H1 (cell line): ENCODE measurements at regions of chr3 and their contacts with region 1.

Region 1: GRCh38 chr3:58177747-58178527 is 32.8 kb downstream of the DNASE1L3 start:
- DNase-seq: peak; percentile 57 to 99
- H3K4me3 ChIP-seq: peak overlapping the region; percentile 0 to 62 (median 47); a peak in 6 of 8 replicates
- H3K27ac ChIP-seq: no peak overlapping the region
- H3K4me1 ChIP-seq: peaks cover 4 to 24% (median 14%) of the 10 kb centered on the region in 4 experiments
- H3K27me3 ChIP-seq: peaks cover 0 to 6% (median 2%) of the 10 kb centered on the region in 4 experiments; a peak in 2 of 7 replicates
- CTCF ChIP-seq: peak; percentile 78 to 94 (median 91)
- EP300 ChIP-seq: no peak
- POLR2A ChIP-seq: no peak; a peak in 1 of 3 replicates
- RAD21 ChIP-seq: peak; percentile 69 to 78

Region 2: GRCh38 chr3:57832900-57833313 is 345.0 kb before region 1 on chr3:
- CTCF ChIA-PET with region 1: no interaction called
- POLR2A ChIA-PET with region 1: no interaction called
- DNase-seq: no peak
- H3K4me3 ChIP-seq: 0 out of 8 replicates have a peak overlapping the region, but pooled peaks of 1 of the 4 experiments have one; percentile 2
- H3K27ac ChIP-seq: no peak overlapping the region
- H3K4me1 ChIP-seq: peaks cover 0 to 16% (median 6%) of the 10 kb centered on the region in 4 experiments; a peak in 4 of 7 replicates
- H3K27me3 ChIP-seq: no peaks in the 10 kb centered on the region
- CTCF ChIP-seq: no peak
- EP300 ChIP-seq: no peak
- POLR2A ChIP-seq: no peak
- RAD21 ChIP-seq: no peak

Region 3: GRCh38 chr3:58008140-58009025 is 169.6 kb before region 1 on chr3 and contains the start of gene FLNB:
- CTCF ChIA-PET with region 1: interaction called, 17 read pairs
- POLR2A ChIA-PET with region 1: interaction called, 5 read pairs
- DNase-seq: peak in 1 of 2 experiments; percentile 90
- H3K4me3 ChIP-seq: peak within 1 kb of the TSS; percentile 65 to 97 (median 90)
- H3K27ac ChIP-seq: peak within 1 kb of the TSS; percentile 62; the same call in 1 of the 2 replicates
- H3K4me1 ChIP-seq: peaks cover 4 to 19% (median 5%) of the 10 kb centered on the region in 4 experiments; a peak in 6 of 7 replicates
- H3K27me3 ChIP-seq: no peaks in the 10 kb centered on the region
- CTCF ChIP-seq: peak; percentile 68 to 95 (median 82)
- EP300 ChIP-seq: no peak
- POLR2A ChIP-seq: peak in 1 of 2 experiments; percentile 90; a peak in 2 of 3 replicates
- RAD21 ChIP-seq: peak; percentile 76 to 84
- total RNA-seq, gene FLNB: 118 and 122 TPM in 2 replicates

Region 4: DNA sequence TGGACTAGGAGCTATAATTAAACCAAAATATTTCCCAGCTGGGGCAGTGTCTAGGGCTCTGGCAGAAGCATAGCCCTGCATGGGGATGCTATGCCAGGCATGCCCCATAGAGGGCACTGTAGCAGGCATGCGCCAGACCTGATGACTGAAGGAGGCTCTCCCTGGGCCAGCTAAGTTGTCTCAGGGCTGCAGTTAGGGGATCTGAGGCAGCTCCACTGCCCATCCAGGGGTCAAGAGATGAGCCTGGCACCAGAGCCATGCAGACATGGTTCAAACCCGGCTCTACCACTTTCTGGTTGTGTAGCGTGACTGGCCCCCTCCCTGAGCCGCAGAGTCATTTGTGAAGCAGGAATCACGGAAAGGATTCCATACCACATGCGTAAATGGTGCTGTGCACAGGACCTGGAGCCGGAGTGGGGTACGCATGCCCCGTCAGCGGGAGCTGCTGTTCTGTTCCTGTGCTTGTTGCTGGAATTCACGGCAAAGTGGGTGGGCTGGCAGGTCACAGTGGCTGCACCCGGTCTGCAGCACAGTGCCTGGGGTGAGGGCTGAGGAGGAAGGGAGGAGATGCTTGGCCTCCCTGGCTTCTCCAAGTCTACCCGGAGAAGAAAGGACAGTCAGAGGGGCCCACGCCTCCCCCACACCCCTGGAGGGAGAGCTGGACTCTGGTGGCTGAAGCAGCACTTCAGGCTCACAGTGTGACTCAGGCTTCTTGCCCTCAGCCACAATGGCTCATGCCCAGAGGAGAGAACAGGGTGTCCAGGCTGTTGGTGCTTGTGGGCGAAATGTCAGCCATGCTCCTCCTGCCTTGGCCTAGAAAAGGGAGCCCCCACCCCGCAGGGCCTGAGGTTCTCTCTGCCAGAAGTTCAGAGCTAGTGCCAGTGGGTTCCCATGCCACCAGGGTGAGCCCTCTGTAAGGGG is 10.2 kb before region 1 on chr3:
- CTCF ChIA-PET with region 1: interaction called, 40 read pairs
- POLR2A ChIA-PET with region 1: interaction called, 5 read pairs
- DNase-seq: peak in 1 of 2 experiments; percentile 92
- H3K4me3 ChIP-seq: no peak overlapping the region
- H3K27ac ChIP-seq: no peak overlapping the region; the same call in 1 of the 2 replicates
- H3K4me1 ChIP-seq: peaks cover 0 to 5% (median 2%) of the 10 kb centered on the region in 4 experiments; a peak in 2 of 7 replicates
- H3K27me3 ChIP-seq: no peaks in the 10 kb centered on the region
- CTCF ChIP-seq: peak; percentile 73 to 97 (median 95)
- EP300 ChIP-seq: no peak
- POLR2A ChIP-seq: no peak
- RAD21 ChIP-seq: peak; percentile 49 to 58

Region 5: GRCh38 chr3:58200846-58201355 is 23.0 kb after region 1 on chr3:
- CTCF ChIA-PET with region 1: interaction called, 19 read pairs
- POLR2A ChIA-PET with region 1: no interaction called
- DNase-seq: no peak
- H3K4me3 ChIP-seq: no peak overlapping the region
- H3K27ac ChIP-seq: no peak overlapping the region
- H3K4me1 ChIP-seq: no peaks in the 10 kb centered on the region
- H3K27me3 ChIP-seq: no peaks in the 10 kb centered on the region
- CTCF ChIP-seq: no peak
- EP300 ChIP-seq: no peak
- POLR2A ChIP-seq: no peak
- RAD21 ChIP-seq: no peak

Region 6: DNA sequence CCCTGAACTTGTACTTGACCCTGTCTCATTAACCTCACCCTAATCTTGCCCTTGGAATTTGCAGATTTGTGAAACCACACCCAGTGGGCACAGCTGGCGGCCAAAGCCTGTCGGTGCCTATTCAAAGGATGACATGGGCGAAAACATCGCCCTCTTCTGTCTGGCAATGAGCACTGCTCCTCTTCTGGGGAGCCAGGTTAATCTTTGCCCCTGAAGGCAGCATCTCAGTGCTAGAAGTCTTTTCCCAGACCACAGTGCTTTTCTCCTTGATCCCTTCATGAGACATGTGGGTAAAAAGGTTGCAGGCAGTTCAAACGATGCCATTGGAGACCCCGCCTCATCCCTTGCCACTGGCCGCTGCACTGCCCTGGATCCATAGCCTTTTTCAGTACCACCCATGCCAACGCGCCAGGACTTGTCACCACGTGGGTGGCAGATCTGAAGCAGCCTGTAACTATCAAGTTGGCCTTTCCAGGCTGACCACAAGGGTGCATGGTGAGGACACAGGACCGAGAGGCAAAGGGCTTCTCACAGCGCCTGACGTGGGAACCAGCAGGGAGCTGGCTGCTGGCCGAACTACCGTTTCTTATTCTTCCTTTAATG is 39.4 kb after region 1 on chr3:
- CTCF ChIA-PET with region 1: interaction called, 21 read pairs
- POLR2A ChIA-PET with region 1: no interaction called
- DNase-seq: peak in 1 of 2 experiments; percentile 82
- H3K4me3 ChIP-seq: peak overlapping the region in 3 of 4 experiments; percentile 24 to 49 (median 36); a peak in 3 of 8 replicates
- H3K27ac ChIP-seq: no peak overlapping the region; the same call in 1 of the 2 replicates
- H3K4me1 ChIP-seq: peaks cover 0 to 3% (median under 1%) of the 10 kb centered on the region in 4 experiments; a peak in 3 of 7 replicates
- H3K27me3 ChIP-seq: no peaks in the 10 kb centered on the region
- CTCF ChIP-seq: peak; percentile 80 to 94 (median 81)
- EP300 ChIP-seq: no peak
- POLR2A ChIP-seq: no peak
- RAD21 ChIP-seq: peak; percentile 47 to 58

Region 7: DNA sequence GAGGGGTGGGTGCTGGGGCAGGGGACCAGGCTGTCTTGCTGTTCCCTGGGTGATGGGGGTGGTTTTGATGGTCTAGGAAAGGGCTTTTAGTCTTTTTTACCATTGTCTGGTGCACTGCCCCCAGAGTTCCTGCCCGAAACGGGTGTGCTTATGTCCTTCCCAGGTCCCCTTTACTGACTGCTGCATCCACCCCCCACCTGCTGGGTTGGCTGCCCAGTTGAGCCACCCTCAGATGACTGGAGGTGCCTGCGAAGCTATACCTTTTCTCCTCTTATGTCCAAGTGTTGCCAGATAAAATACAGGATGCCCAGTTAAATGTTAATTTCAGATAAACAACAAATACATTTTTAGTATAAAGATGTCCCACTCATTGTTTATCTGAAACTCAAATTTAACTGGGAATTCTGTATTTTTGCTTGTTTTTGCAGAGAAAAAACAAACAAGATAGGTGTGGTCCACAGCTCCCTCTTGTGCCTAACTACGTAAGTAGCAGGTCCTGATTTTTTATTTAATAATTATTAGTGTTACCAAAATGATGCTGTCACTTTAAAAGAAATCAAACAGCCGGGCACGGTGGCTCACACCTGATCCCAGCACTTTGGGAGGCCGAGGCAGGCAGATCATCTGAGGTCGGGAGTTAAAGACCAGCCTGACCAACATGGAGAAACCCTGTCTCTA is 122.0 kb after region 1 on chr3:
- CTCF ChIA-PET with region 1: interaction called, 177 read pairs
- POLR2A ChIA-PET with region 1: interaction called, 3 read pairs
- DNase-seq: peak in 1 of 2 experiments; percentile 53
- H3K4me3 ChIP-seq: no peak overlapping the region
- H3K27ac ChIP-seq: no peak overlapping the region
- H3K4me1 ChIP-seq: peaks cover 0 to 3% (median 0%) of the 10 kb centered on the region in 4 experiments; a peak in 1 of 7 replicates
- H3K27me3 ChIP-seq: no peaks in the 10 kb centered on the region; a peak in 1 of 7 replicates
- CTCF ChIP-seq: peak in 2 of 3 experiments; percentile 42 to 44; a peak in 2 of 4 replicates
- EP300 ChIP-seq: no peak
- POLR2A ChIP-seq: no peak
- RAD21 ChIP-seq: peak; percentile 68 to 76